Activated T-helper 2 cell treated with anti-CD3 and anti-CD28 coated beads, Interferon-gamma antibody, Interleukin-2, Interleukin-4, amounts not matched to agents 10 μg/mL and 5 μg/mL and 100 μg/mL, durations not matched to agents 14 hours and 24 hours and 36 hours (primary cell): ENCODE measurements at regions of chr7 and their contacts with region 1.

Region 1: DNA sequence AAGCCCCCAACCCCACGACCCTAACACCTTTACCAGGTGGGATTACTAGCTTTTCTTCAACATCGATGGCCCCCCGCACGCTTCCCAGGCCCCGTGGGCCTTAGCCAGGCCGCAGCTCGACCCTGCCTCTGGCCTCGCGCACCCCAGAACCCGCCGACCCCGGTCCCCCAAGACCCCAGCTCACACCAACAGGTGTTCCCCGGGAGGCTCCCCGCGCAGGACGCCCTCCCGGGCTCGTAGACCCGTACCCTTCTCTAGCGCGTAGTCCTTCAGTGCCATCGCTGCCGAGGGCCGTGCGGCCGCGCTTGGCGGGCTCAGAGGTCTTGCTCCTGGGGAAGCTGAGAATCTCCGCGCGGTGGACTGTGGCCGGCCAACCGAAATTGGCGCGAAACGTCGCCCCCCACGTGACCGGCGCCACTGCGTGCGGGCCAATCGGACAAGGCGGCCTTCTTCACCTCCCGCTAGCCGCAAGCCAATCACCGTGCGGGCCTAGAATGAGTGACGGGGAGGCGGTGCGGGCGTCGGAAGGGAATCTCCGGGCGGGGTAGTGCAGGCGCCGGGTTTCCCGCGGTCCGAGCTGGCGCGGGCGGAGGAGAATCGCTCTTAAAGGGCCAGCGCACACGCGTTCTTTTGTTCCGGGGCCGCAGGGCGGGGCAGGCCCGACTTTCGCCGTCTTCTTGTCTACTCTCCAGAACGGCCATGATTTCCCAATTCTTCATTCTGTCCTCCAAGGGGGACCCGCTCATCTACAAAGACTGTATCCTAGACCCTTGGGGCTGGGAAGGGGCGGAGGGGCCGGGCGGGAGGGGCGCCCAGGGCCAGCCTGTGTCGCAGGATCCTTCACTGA is at the starts of genes AP4M1 and MCM7:
- DNase-seq: peak; percentile 98
- H3K4me3 Mint-ChIP-seq: peak within 1 kb of the TSS; percentile 93
- H3K27ac Mint-ChIP-seq: peak within 1 kb of the TSS; percentile 93
- H3K4me1 Mint-ChIP-seq: peaks cover 37% of the 10 kb centered on the region
- H3K27me3 Mint-ChIP-seq: no peaks in the 10 kb centered on the region
- total RNA-seq, gene AP4M1: 12.2 and 16.4 TPM in 2 replicates
- total RNA-seq, gene MCM7: 383 and 389 TPM in 2 replicates

Region 2: DNA sequence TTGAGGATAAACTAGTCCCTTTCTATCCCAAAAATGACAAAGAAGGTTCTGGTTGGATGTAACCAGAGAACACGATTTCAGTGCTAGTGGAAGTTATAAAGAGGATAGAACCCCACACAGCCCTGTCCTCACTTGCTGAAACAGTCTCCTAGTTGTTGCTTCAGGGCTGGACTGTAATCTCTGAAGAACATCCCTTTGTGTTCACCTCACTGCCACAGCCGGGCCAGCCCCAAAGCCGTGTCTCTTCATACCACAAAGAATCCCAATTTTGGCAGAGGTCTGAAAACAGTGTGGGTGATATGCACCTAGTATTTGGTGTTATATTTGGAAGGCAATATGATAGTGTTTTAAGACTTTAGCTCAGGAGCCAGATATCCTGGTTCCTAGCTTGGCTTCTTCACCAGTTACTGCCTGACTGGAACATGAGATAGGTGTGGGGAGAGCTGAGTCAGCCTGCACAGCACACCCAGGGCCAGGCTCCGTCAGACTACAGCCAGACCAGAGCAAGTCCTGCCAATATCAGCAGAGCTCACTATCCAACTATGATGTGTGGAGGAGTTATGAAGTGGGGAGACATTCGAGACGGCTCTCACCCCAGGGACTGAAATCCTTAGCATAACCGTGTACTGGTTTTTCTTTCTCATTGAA is 338.4 kb before region 1 on chr7:
- intact Hi-C with region 1: no loop called
- DNase-seq: no peak
- H3K4me3 Mint-ChIP-seq: no peak overlapping the region
- H3K27ac Mint-ChIP-seq: no peak overlapping the region
- H3K4me1 Mint-ChIP-seq: peaks cover 5% of the 10 kb centered on the region
- H3K27me3 Mint-ChIP-seq: peaks cover 9% of the 10 kb centered on the region

Region 3: GRCh38 chr7:100088621-100089457 is 12.4 kb before region 1 on chr7 and contains the start of gene COPS6:
- intact Hi-C with region 1: loop called (anchors 1 kb)
- DNase-seq: peak; percentile 84
- H3K4me3 Mint-ChIP-seq: peak within 1 kb of the TSS; percentile 87
- H3K27ac Mint-ChIP-seq: peak within 1 kb of the TSS; percentile 89
- H3K4me1 Mint-ChIP-seq: peaks cover 18% of the 10 kb centered on the region
- H3K27me3 Mint-ChIP-seq: peaks cover 2% of the 10 kb centered on the region
- total RNA-seq, gene COPS6: 116 and 119 TPM in 2 replicates

Region 4: DNA sequence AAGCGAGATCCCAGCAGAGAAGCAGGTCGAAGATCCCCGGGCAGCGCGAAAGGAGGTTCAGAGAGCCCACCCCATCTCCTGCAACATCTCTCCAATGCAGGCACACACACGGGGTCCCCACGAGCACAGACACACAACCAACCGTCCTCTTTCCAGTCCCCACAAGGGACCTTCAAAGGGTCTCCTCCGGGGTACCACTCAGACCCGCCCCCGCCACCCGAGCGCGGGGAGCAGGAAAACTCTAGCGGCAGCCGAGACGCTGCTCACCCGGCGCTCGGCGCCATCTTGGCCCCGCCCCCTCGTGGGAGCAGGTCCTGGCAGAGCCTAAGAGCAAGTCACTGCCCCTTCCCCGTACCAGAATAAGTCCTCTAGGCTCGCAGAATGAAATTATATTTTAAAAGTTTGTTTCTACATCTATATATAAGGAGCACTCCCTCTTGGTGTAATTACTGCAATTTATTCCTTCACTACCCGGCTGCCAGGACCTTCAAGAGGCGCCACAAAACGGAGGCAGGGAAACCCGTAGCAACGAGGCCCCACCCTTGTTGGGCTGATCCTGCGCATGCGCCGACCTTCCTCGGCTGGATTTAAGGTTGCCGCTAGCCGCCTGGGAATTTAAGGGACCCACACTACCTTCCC is 17.9 kb after region 1 on chr7 and contains the starts of genes CNPY4 and TAF6:
- intact Hi-C with region 1: loop called (anchors 1 kb)
- DNase-seq: peak; percentile 91
- H3K4me3 Mint-ChIP-seq: peak within 1 kb of the TSS; percentile 97
- H3K27ac Mint-ChIP-seq: peak within 1 kb of the TSS; percentile 90
- H3K4me1 Mint-ChIP-seq: peaks cover 12% of the 10 kb centered on the region
- H3K27me3 Mint-ChIP-seq: no peaks in the 10 kb centered on the region
- total RNA-seq, gene CNPY4: 17.0 and 19.1 TPM in 2 replicates
- total RNA-seq, gene TAF6: 68.1 and 76.9 TPM in 2 replicates

Region 5: GRCh38 chr7:100126931-100127865 is 26.0 kb after region 1 on chr7 and contains the start of gene MBLAC1:
- intact Hi-C with region 1: loop called (anchors 1 kb)
- DNase-seq: peak; percentile 88
- H3K4me3 Mint-ChIP-seq: peak within 1 kb of the TSS; percentile 99
- H3K27ac Mint-ChIP-seq: peak within 1 kb of the TSS; percentile 100
- H3K4me1 Mint-ChIP-seq: peaks cover 24% of the 10 kb centered on the region
- H3K27me3 Mint-ChIP-seq: no peaks in the 10 kb centered on the region
- total RNA-seq, gene MBLAC1: 2.8 and 2.9 TPM in 2 replicates

Region 6: GRCh38 chr7:100208911-100209408 is 107.7 kb after region 1 on chr7:
- intact Hi-C with region 1: loop called (anchors 1 kb)
- DNase-seq: peak; percentile 46
- H3K4me3 Mint-ChIP-seq: peak overlapping the region; percentile 60
- H3K27ac Mint-ChIP-seq: peak overlapping the region; percentile 79
- H3K4me1 Mint-ChIP-seq: peaks cover 43% of the 10 kb centered on the region
- H3K27me3 Mint-ChIP-seq: no peaks in the 10 kb centered on the region